Activated CD4-positive, alpha-beta T cell treated with anti-CD3 and anti-CD28 coated beads, Interleukin-2, amount 10 ng/mL, durations not matched to agents 7 days and 5 days (primary cell): ENCODE measurements at regions of chr12 and their contacts with region 1.

Region 1: GRCh38 chr12:122860346-122861090 is 25.3 kb downstream of the HIP1R start:
- DNase-seq: peak; percentile 85
- H3K4me3 Mint-ChIP-seq: no peak overlapping the region
- H3K27ac Mint-ChIP-seq: no peak overlapping the region
- H3K4me1 Mint-ChIP-seq: no peaks in the 10 kb centered on the region
- H3K27me3 Mint-ChIP-seq: no peaks in the 10 kb centered on the region

Region 2: GRCh38 chr12:122584177-122584780 is 276.2 kb before region 1 on chr12:
- CTCF ChIA-PET with region 1: no interaction called
- POLR2A ChIA-PET with region 1: no interaction called
- DNase-seq: no peak
- H3K4me3 Mint-ChIP-seq: no peak overlapping the region
- H3K27ac Mint-ChIP-seq: no peak overlapping the region
- H3K4me1 Mint-ChIP-seq: no peaks in the 10 kb centered on the region
- H3K27me3 Mint-ChIP-seq: no peaks in the 10 kb centered on the region

Region 3: GRCh38 chr12:122614839-122615238 is 245.7 kb before region 1 on chr12:
- CTCF ChIA-PET with region 1: no interaction called
- POLR2A ChIA-PET with region 1: no interaction called
- DNase-seq: no peak
- H3K4me3 Mint-ChIP-seq: no peak overlapping the region
- H3K27ac Mint-ChIP-seq: no peak overlapping the region
- H3K4me1 Mint-ChIP-seq: no peaks in the 10 kb centered on the region
- H3K27me3 Mint-ChIP-seq: no peaks in the 10 kb centered on the region

Region 4: DNA sequence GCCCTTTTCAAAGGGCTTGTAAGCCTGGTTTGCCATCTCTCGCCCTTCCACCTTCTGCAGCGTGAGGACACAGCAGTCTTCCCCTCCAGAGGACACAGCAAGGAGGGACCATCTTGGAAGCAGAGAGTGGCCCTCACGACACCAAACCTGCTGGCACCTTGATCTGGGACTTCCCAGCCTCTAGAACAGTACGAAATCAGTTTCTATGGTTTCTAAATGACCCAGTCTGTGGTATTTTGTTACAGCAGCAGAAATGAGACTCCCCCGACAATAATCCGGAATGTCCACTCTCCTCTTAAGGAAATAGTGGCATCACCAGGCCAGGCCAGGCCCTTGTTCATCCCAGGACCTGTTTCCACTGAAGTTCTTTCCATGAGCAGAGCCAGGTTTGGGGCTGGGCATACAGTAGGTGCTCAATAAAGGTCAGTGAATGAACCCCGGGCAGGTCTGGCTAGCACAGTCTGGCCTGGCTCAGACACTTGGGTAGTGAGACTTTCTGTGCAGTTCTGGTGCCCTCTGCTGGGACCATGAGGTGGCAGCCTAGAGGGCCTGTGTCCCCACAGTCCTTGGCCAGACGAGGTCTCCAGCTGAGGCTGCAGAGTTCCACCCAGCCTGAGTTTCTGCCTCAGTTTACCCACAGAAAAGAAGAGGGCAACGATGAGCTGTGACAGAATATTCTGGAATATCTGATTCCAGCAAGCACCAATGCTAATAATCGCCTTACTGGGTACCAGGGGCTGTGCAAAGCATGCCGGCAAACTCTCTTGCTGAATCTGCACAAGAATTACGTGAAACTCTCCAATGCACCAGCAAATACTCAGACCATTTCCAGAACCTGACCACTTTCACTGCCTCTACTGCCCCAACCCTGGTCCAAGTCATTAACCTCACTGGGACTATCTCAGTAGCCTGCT is 91.7 kb after region 1 on chr12:
- CTCF ChIA-PET with region 1: interaction called, 53 read pairs
- POLR2A ChIA-PET with region 1: no interaction called
- DNase-seq: peak; percentile 78
- H3K4me3 Mint-ChIP-seq: no peak overlapping the region
- H3K27ac Mint-ChIP-seq: no peak overlapping the region
- H3K4me1 Mint-ChIP-seq: peaks cover 14% of the 10 kb centered on the region
- H3K27me3 Mint-ChIP-seq: no peaks in the 10 kb centered on the region

Region 5: GRCh38 chr12:122969676-122970075 is 109.2 kb after region 1 on chr12:
- CTCF ChIA-PET with region 1: interaction called, 13 read pairs
- POLR2A ChIA-PET with region 1: no interaction called
- DNase-seq: no peak
- H3K4me3 Mint-ChIP-seq: no peak overlapping the region
- H3K27ac Mint-ChIP-seq: no peak overlapping the region
- H3K4me1 Mint-ChIP-seq: peaks cover 23% of the 10 kb centered on the region
- H3K27me3 Mint-ChIP-seq: no peaks in the 10 kb centered on the region